K562 (cell line): ENCODE measurements at regions of chrX and their contacts with region 1.

Region 1: DNA sequence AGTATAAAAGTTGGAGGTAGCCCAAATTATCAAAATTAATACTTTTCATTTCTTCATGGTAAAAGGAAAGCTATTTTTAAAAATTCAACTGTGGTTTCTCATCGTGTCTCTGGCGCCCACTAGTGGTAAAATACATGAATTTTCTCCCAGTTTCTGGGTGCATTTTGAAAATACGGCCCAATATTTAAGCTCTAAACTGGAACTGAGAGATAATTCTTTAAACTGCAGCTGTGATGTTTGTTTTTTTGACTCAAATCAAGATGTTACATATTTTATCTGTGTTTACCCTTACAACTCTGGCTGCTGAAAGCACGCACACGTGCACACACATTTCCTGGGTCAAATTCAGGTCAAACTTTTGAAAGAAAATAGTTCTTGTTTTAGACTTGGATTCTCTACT is 123.9 kb upstream of the ACSL4 start:
- DNase-seq: peak; percentile 20 to 57 (median 26)
- ATAC-seq: no peak
- H3K4me3 ChIP-seq: no peak overlapping the region
- H3K27ac ChIP-seq: no peak overlapping the region
- H3K4me1 ChIP-seq: peaks cover 0 to 9% of the 10 kb centered on the region in 2 experiments; a peak in 2 of 5 replicates
- H3K27me3 ChIP-seq: no peaks in the 10 kb centered on the region
- CTCF ChIP-seq: peak; percentile 56 to 79 (median 64)
- EP300 ChIP-seq: no peak
- POLR2A ChIP-seq: no peak
- RAD21 ChIP-seq: peak; percentile 66 to 78

Region 2: DNA sequence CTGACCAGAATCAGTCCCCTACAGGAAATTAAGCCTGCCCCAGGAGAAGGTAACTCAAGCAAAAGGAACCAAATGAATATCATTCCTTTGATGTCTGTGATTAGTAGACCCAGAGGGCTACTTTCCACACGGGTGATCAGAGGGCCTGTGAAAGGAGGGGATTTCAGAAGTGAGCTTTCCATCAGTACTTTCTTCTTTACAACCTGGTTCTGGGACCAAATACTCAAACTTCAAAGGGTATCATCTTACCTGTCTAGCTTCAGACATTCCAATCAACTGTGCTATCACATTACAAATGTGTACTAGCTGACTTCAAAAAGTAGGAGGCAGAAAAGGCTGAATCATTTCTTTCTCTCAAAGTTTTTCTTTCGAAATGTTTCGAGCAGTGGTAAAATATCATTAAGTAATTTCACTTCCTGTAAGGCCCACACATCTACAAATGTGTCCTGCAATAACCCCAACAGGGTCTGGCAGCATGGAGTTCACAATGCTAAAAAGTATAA is 147.8 kb before region 1 on chrX:
- CTCF ChIA-PET with region 1: interaction called, 20 read pairs
- POLR2A ChIA-PET with region 1: interaction called, 6 read pairs
- in situ Hi-C with region 1: no loop called
- intact Hi-C with region 1: loop called (anchors 1 kb)
- DNase-seq: no peak
- ATAC-seq: no peak
- H3K4me3 ChIP-seq: no peak overlapping the region
- H3K27ac ChIP-seq: no peak overlapping the region
- H3K4me1 ChIP-seq: no peaks in the 10 kb centered on the region; a peak in 2 of 5 replicates
- H3K27me3 ChIP-seq: no peaks in the 10 kb centered on the region
- CTCF ChIP-seq: no peak
- EP300 ChIP-seq: no peak
- POLR2A ChIP-seq: no peak
- RAD21 ChIP-seq: no peak

Region 3: DNA sequence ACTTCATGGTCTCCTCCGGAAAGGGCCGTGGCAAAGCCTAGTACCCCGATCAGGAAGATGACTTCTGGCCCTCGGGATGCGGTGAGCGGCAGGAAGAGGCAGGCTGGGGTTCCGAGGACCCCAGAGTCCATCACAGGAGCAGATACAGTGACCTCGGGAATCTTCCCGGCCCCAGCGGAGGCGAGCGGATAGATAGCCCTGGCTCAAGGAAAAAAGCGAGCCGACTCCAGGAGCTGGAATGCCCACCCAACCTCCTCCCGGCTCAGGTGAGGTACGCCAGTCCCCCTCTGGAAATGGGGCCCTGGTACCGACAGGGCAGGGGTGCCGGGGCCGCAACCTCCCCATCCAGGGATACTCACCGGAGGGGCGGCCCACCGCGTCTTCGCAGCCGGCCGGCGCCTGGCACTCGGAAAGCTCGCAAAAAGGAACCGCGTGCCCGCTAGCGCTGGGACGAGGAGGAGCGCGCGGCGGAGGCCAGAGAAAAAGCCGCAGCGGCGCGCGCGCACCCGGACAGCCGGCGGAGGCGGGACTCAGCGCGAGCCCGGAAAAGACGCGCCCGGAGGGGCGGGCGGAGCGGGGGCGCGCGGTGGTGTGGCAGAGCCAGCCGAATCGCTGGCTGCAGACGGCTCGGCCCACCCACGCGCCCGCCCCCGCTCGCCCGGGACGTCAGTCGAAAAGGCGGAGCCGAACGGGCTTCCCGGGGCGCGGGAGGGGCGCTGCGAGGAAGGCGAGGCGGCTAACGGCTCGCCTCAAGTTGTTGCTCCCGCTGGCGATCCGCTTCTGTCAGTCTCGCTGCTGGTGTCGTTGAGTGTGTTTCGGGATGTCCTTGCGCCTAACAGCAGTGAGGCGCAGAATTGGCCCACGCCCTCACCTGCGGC is 124.0 kb before region 1 on chrX and contains the start of gene ACSL4:
- CTCF ChIA-PET with region 1: no interaction called
- POLR2A ChIA-PET with region 1: no interaction called
- in situ Hi-C with region 1: no loop called
- intact Hi-C with region 1: loop called (anchors 1 kb)
- DNase-seq: peak; percentile 88 to 91 (median 90)
- ATAC-seq: peak; percentile 95
- H3K4me3 ChIP-seq: peak within 1 kb of the TSS; percentile 95
- H3K27ac ChIP-seq: peak within 1 kb of the TSS; percentile 90
- H3K4me1 ChIP-seq: peaks cover 7 to 12% of the 10 kb centered on the region in 2 experiments; a peak in 3 of 5 replicates
- H3K27me3 ChIP-seq: no peaks in the 10 kb centered on the region
- CTCF ChIP-seq: no peak
- EP300 ChIP-seq: no peak; the same call in none of the 2 replicates
- POLR2A ChIP-seq: peak; percentile 78
- RAD21 ChIP-seq: no peak
- polyA plus RNA-seq, gene ACSL4: 9.8 to 12.0 TPM

Region 4: GRCh38 chrX:109774706-109775105 is 82.3 kb before region 1 on chrX:
- CTCF ChIA-PET with region 1: no interaction called
- POLR2A ChIA-PET with region 1: no interaction called
- in situ Hi-C with region 1: no loop called
- intact Hi-C with region 1: loop called (anchors 5 kb)
- DNase-seq: peak; percentile 42 to 64 (median 46)
- ATAC-seq: peak; percentile 72
- H3K4me3 ChIP-seq: no peak overlapping the region
- H3K27ac ChIP-seq: peak overlapping the region; percentile 45; the same call in 2 of the 3 replicates
- H3K4me1 ChIP-seq: peaks cover 0 to 25% of the 10 kb centered on the region in 2 experiments; a peak in 4 of 5 replicates
- H3K27me3 ChIP-seq: no peaks in the 10 kb centered on the region
- CTCF ChIP-seq: no peak
- EP300 ChIP-seq: peak; percentile 40; the same call in 1 of the 2 replicates
- POLR2A ChIP-seq: no peak
- RAD21 ChIP-seq: no peak